Activated T-helper 1 cell treated with anti-CD3 and anti-CD28 coated beads, Interleukin-12 subunit alpha, Interleukin-12 subunit beta, Interleukin-2, Interleukin-4 antibody, amounts not matched to agents 30 ng/mL and 10 ng/mL and 1 ng/mL, durations not matched to agents 14 hours and 24 hours and 36 hours (primary cell): ENCODE measurements at regions of chr13 and their contacts with region 1.

Region 1: GRCh38 chr13:30422054-30422839 is at the start of gene UBE2L5:
- DNase-seq: peak; percentile 75
- H3K4me3 Mint-ChIP-seq: peak within 1 kb of the TSS; percentile 88
- H3K27ac Mint-ChIP-seq: peak within 1 kb of the TSS; percentile 86
- H3K4me1 Mint-ChIP-seq: peaks cover 26% of the 10 kb centered on the region
- H3K27me3 Mint-ChIP-seq: peaks cover 4% of the 10 kb centered on the region
- total RNA-seq, gene UBE2L5: not detected in 2 replicates

Region 2: DNA sequence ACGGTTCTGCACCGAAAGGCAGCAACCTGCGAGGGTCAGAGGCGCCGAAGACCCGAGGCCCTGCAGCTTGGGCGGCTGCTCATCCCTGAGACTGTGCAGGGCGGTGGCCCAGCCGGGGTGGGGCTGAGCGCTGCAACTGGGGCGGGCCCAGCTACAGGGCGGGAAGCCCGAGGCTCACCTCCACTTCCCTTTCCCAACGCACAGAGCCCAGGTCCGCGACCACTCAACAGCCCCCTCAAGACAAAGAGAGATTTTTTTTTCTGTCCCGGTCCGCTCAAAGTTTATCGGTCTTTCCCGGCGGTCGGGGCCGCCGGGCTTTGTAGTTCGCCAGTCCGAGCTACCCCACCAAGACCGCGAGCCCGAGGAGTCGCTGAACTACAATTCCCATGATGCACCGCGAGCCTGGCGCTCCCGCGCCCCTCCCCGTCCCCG is 115.5 kb before region 1 on chr13:
- intact Hi-C with region 1: loop called (anchors 1 kb)
- DNase-seq: peak; percentile 90
- H3K4me3 Mint-ChIP-seq: peak overlapping the region; percentile 88
- H3K27ac Mint-ChIP-seq: peak overlapping the region; percentile 84
- H3K4me1 Mint-ChIP-seq: peaks cover 65% of the 10 kb centered on the region
- H3K27me3 Mint-ChIP-seq: no peaks in the 10 kb centered on the region

Region 3: DNA sequence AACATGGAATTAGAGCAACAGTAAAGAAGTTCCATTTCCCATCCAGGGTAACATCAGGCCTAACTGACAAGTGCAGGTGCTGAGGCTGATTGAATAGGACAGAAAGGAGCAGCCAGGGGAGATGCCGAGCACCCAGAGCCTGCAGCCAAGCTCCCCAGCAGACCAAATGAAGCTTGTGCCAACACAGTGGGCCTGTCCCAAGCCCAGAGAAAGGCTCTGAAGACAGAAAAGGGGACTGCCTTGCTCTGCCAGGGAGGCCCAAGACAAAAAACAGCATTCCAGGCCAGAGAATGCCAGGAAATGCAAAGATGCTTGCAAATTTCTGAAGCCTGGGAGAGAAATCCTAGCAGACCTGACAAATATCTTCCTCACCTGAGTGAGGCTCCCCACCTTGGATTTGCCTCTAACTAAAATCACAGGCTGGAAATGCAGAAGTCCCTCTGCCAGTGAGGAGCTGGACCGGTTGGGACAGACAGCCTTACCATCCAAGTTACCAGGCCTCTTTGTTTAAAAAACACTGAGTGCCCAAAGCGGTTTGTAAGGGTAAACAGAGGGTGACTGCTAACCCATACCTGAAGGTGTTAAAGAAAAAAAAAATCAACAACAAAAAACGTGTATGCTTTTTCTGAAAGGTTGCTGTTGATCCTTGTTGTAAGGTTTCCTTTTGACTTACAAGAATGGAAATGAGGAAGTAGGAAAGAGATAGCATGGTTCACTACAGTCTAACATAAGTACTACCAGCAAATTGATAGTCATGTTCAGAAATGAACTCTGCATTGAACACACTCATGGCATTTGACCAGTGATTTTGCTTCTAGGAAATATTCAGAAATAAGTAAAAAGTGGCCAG is 55.3 kb after region 1 on chr13:
- intact Hi-C with region 1: no loop called
- DNase-seq: no peak
- H3K4me3 Mint-ChIP-seq: no peak overlapping the region
- H3K27ac Mint-ChIP-seq: no peak overlapping the region
- H3K4me1 Mint-ChIP-seq: no peaks in the 10 kb centered on the region
- H3K27me3 Mint-ChIP-seq: peaks cover 9% of the 10 kb centered on the region

Region 4: GRCh38 chr13:30865123-30866049 is 443.1 kb after region 1 on chr13:
- intact Hi-C with region 1: loop called (anchors 10 kb)
- DNase-seq: peak; percentile 9
- H3K4me3 Mint-ChIP-seq: no peak overlapping the region
- H3K27ac Mint-ChIP-seq: no peak overlapping the region
- H3K4me1 Mint-ChIP-seq: no peaks in the 10 kb centered on the region
- H3K27me3 Mint-ChIP-seq: peaks cover 11% of the 10 kb centered on the region